Activated CD8-positive, alpha-beta T cell treated with anti-CD3 and anti-CD28 coated beads for 36 hours (primary cell): ENCODE measurements at regions of chr14 and their contacts with region 1.

Region 1: GRCh38 chr14:34671716-34672115 is 41.8 kb upstream of the SNX6 start:
- DNase-seq: no peak
- ATAC-seq: no peak
- H3K4me3 Mint-ChIP-seq: no peak overlapping the region
- H3K27ac Mint-ChIP-seq: no peak overlapping the region
- H3K4me1 Mint-ChIP-seq: no peaks in the 10 kb centered on the region
- H3K27me3 Mint-ChIP-seq: no peaks in the 10 kb centered on the region
- CTCF ChIP-seq: no peak

Region 2: GRCh38 chr14:34628681-34629135 is 43.0 kb before region 1 on chr14:
- CTCF ChIA-PET with region 1: no interaction called
- POLR2A ChIA-PET with region 1: no interaction called
- intact Hi-C with region 1: no loop called
- DNase-seq: peak; percentile 59
- ATAC-seq: peak; percentile 16
- H3K4me3 Mint-ChIP-seq: peak overlapping the region; percentile 95
- H3K27ac Mint-ChIP-seq: peak overlapping the region; percentile 96
- H3K4me1 Mint-ChIP-seq: peaks cover 24% of the 10 kb centered on the region
- H3K27me3 Mint-ChIP-seq: no peaks in the 10 kb centered on the region
- CTCF ChIP-seq: no peak

Region 3: GRCh38 chr14:34693228-34693939 is 21.7 kb after region 1 on chr14:
- CTCF ChIA-PET with region 1: interaction called, 14 read pairs
- POLR2A ChIA-PET with region 1: no interaction called
- intact Hi-C with region 1: no loop called
- DNase-seq: peak; percentile 38
- ATAC-seq: peak; percentile 56
- H3K4me3 Mint-ChIP-seq: no peak overlapping the region
- H3K27ac Mint-ChIP-seq: no peak overlapping the region
- H3K4me1 Mint-ChIP-seq: peaks cover 6% of the 10 kb centered on the region
- H3K27me3 Mint-ChIP-seq: no peaks in the 10 kb centered on the region
- CTCF ChIP-seq: no peak

Region 4: DNA sequence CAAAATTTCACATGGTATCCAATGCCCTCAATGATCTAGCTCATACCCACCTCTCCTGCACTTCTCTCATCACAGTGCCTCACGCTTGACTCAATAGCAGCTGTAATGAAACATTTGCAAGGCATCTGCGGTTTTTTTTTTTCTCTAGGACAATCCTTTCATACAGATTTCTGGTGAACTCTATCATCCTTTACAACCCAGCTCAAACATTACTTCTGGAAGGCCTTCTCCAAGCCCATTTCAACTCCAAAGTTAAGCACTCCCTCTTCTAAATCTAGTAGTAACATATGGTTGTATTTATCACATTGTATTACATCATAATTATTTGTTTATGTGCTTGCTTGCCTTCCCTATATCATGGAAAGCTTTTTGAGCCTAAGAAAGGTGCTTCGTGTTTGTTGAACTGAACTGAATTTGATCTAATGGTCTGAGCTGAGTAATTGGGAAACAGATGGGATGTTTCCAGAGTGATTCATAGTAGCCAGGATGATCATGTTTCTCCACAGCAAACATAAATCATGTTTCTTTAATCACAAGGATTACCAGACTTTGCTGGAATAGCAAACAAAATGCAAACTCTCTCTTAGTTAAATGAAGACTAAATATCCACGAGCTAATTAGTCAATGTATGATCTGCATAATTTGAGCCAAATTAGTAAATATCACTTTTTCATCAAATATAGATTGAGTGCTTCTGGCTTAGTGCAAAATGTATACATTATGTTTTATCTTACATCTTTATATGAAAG is 28.3 kb after region 1 on chr14:
- CTCF ChIA-PET with region 1: interaction called, 14 read pairs
- POLR2A ChIA-PET with region 1: no interaction called
- intact Hi-C with region 1: no loop called
- DNase-seq: no peak
- ATAC-seq: no peak
- H3K4me3 Mint-ChIP-seq: no peak overlapping the region
- H3K27ac Mint-ChIP-seq: no peak overlapping the region
- H3K4me1 Mint-ChIP-seq: no peaks in the 10 kb centered on the region
- H3K27me3 Mint-ChIP-seq: no peaks in the 10 kb centered on the region
- CTCF ChIP-seq: no peak

Region 5: DNA sequence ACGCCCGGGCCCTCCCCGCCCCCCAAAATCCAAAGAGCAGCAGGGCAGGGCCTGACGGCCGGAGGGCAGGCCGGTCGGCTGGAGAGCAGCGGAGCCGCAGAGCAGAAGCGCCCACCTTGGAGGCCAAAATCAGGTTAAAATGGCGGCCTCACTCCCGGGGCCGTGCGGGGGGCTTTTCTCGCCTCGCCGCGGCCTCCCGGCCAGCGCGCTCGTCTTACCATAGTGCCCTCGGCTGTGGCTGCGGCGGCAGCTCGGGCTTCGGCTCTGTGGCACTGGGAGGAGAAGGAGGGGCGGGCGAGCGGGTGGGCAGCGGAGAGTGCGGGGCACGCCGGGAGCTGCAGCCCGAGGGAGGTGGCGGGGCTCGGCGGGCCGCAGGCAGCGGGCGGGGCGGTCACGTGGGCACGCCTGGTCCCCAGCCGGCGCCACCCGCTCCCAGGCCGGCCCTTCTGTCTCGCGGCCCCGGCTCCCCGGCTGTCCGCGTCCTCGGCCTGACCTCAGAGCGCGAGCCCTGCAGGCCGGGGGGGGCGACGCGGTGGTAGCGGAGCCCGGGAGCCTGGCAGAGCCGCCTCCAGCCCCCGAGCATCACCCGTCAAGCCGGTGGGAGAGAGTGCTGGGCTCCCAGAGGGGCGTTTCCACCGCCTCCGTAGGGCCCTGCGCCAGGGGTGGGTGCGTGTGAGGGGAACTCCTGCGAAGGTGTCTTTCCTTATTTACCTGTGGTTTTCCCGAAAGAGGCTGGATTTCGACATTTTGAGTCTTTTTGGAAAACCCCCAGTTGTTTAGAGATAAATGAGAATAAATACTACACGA is 42.8 kb after region 1 on chr14 and contains the start of gene CFL2:
- CTCF ChIA-PET with region 1: interaction called, 105 read pairs
- POLR2A ChIA-PET with region 1: interaction called, 3 read pairs
- intact Hi-C with region 1: no loop called
- DNase-seq: peak; percentile 71
- ATAC-seq: peak; percentile 87
- H3K4me3 Mint-ChIP-seq: peak within 1 kb of the TSS; percentile 89
- H3K27ac Mint-ChIP-seq: peak within 1 kb of the TSS; percentile 89
- H3K4me1 Mint-ChIP-seq: peaks cover 23% of the 10 kb centered on the region
- H3K27me3 Mint-ChIP-seq: peaks cover 3% of the 10 kb centered on the region
- CTCF ChIP-seq: no peak
- total RNA-seq, gene CFL2: 3.4 to 5.2 TPM